ENCODE measurements at regions of chr2 and their contacts with region 1.

Region 1: DNA sequence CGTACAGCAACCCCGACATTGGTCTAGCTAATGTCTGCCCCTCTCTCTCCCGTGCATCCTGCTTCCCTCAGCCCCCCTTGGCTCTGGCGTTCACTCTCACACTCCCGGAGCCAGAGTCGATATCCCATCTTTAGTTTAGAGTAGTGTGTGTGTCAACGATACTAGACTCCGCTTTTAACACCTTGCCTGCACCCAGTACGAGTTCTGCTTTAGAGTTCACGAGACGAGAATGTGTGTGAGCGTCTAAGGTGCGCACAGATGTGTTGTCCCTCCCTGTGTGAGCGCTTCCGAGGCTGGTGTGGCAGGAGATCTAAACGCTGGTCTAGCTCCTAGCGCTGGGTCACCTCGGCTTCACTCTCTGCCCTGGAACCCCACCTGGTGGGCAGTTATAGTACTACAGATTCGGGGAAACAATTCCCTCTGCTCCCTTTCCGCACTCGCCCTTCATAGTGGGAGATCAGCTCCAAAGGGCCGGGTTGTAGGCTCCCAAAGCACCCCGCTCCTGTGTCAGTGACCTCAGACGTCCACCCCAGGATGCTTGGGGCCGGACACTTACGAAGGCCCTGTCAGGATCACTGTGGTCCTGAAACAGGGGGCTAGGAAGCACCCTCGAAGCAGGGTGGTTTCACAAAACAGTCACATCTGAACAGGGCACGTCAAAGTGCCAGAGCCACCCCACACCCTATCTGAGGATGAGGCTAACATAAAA is 2.6 kb upstream of the CYP26B1 start:
- DNase-seq: peak; percentile 75
- ATAC-seq: peak; percentile 85
- H3K4me3 ChIP-seq: peak overlapping the region in 2 of 3 experiments; percentile 46 to 70; a peak in 3 of 6 replicates
- H3K27ac ChIP-seq: no peak overlapping the region
- H3K4me1 ChIP-seq: peaks cover 30% of the 10 kb centered on the region
- H3K27me3 ChIP-seq: peaks cover 38 to 93% of the 10 kb centered on the region in 2 experiments
- CTCF ChIP-seq: peak; percentile 97
- EP300 ChIP-seq: no peak
- POLR2A ChIP-seq: no peak
- RAD21 ChIP-seq: peak; percentile 89

Region 2: GRCh38 chr2:71545572-71546274 is 604.6 kb before region 1 on chr2:
- CTCF ChIA-PET with region 1: interaction called, 10 read pairs
- POLR2A ChIA-PET with region 1: no interaction called
- in situ Hi-C with region 1: loop called (anchors 5 kb)
- intact Hi-C with region 1: loop called (anchors 1 kb)
- DNase-seq: peak; percentile 64
- ATAC-seq: peak; percentile 86
- H3K4me3 ChIP-seq: peak overlapping the region in 2 of 3 experiments; percentile 10 to 29; a peak in 2 of 6 replicates
- H3K27ac ChIP-seq: no peak overlapping the region
- H3K4me1 ChIP-seq: peaks cover 37% of the 10 kb centered on the region
- H3K27me3 ChIP-seq: peaks cover 2 to 31% of the 10 kb centered on the region in 2 experiments; a peak in 4 of 5 replicates
- CTCF ChIP-seq: peak; percentile 97
- EP300 ChIP-seq: no peak
- POLR2A ChIP-seq: no peak
- RAD21 ChIP-seq: peak; percentile 88

Region 3: DNA sequence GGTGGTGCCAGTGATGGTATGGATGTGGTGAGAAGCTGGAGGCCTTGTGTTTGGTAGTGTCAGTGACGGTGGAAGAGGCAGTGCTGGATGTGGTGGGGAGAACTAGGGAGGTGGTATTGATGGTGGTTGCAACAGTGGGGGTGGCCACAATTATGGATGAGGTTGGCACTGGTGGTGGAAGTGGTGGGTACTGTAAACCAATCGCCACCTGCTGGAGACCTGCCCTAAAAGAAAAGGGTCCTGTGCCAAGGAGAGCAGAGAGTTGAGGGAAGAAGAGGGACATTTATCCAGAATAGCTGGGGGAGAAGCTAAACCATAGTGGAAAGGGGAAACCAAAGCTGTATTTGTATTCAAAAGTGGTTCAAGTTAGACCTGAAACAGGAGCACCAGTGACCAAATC is 276.7 kb before region 1 on chr2:
- CTCF ChIA-PET with region 1: interaction called, 3 read pairs
- POLR2A ChIA-PET with region 1: no interaction called
- in situ Hi-C with region 1: no loop called
- intact Hi-C with region 1: loop called (anchors 5 kb)
- DNase-seq: no peak
- ATAC-seq: no peak
- H3K4me3 ChIP-seq: no peak overlapping the region
- H3K27ac ChIP-seq: no peak overlapping the region
- H3K4me1 ChIP-seq: no peaks in the 10 kb centered on the region
- H3K27me3 ChIP-seq: peaks cover 6 to 24% of the 10 kb centered on the region in 2 experiments; a peak in 3 of 5 replicates
- CTCF ChIP-seq: no peak
- EP300 ChIP-seq: no peak
- POLR2A ChIP-seq: no peak
- RAD21 ChIP-seq: no peak

Region 4: DNA sequence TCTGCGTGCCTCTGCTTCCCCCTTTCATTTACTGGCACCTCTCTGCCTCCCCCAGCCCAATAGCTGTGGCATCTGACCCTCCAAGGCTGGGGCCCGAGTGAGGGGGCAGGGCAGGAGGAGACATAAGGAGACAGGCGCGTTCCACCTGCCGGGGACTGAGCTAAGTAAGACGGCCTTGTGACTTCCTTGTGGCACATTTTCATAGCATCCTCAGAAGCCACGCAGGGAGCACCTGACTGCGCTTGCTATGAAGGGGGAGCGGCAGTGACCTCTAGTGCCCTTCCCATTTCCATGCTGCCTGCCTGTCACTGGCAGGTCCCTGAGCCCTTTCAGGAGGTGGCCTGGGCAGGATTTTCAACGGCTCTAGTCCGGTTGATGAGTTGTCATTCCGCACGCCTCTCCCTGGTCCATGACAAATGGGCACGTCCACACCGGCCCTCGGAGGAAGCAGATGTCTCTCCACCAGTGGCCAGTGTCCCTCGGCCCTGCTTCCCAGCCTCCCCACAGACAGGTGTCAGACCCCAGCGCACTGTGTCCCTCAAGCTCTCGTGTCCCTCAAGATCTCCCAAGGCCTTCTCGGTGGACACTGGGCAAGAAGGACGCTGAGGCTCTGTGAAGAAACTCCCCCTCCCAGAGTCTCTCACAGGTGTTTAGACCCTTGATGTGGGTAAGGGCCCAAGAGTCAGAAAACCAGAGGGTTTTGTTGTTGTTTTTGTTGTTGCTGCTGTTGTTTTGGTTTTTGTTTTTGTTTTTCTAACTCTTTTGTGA is 45.3 kb before region 1 on chr2:
- CTCF ChIA-PET with region 1: no interaction called
- POLR2A ChIA-PET with region 1: no interaction called
- in situ Hi-C with region 1: no loop called
- intact Hi-C with region 1: loop called (anchors 2 kb)
- DNase-seq: peak; percentile 15
- ATAC-seq: peak; percentile 81
- H3K4me3 ChIP-seq: no peak overlapping the region
- H3K27ac ChIP-seq: no peak overlapping the region
- H3K4me1 ChIP-seq: no peaks in the 10 kb centered on the region
- H3K27me3 ChIP-seq: peaks cover 2 to 29% of the 10 kb centered on the region in 2 experiments; a peak in 3 of 5 replicates
- CTCF ChIP-seq: peak; percentile 68
- EP300 ChIP-seq: no peak
- POLR2A ChIP-seq: no peak
- RAD21 ChIP-seq: peak; percentile 53

Region 5: DNA sequence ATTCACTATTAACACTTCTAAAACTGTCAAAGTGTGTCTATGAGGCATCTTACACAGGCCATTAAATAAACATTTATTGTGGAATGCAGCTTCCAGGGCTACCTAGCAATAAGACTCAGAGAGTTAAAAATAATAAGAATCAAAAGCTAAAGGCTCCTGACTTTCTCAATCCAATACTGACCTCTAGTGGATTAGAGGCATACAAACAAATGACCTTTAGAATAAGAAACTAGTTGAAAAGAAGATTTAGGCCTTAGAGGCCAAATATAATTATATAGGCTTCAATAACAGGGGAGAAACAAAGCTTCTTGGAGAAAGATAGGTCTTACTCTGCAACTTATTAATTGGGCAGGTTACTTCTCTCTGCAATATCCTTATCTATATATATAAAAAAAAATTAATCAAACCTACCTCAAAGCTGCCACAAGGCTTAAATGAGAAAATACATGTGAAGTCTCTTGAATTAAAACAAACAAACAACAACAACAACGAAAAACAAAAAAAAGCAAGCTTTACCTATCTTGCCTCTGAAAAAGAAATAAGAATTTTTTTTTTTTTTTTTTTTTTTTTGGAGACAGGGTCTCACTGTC is 429.4 kb after region 1 on chr2:
- CTCF ChIA-PET with region 1: interaction called, 9 read pairs
- POLR2A ChIA-PET with region 1: no interaction called
- in situ Hi-C with region 1: loop called (anchors 5 kb)
- intact Hi-C with region 1: loop called (anchors 1 kb)
- DNase-seq: peak; percentile 70
- ATAC-seq: no peak
- H3K4me3 ChIP-seq: no peak overlapping the region
- H3K27ac ChIP-seq: no peak overlapping the region
- H3K4me1 ChIP-seq: peaks cover 7% of the 10 kb centered on the region
- H3K27me3 ChIP-seq: no peaks in the 10 kb centered on the region
- CTCF ChIP-seq: peak; percentile 71
- EP300 ChIP-seq: no peak
- POLR2A ChIP-seq: no peak
- RAD21 ChIP-seq: peak; percentile 81

Measured in HepG2 (cell line).